Thyroid gland (tissue), 4 donors: ENCODE measurements at regions of chr6 and their contacts with region 1.

Region 1: DNA sequence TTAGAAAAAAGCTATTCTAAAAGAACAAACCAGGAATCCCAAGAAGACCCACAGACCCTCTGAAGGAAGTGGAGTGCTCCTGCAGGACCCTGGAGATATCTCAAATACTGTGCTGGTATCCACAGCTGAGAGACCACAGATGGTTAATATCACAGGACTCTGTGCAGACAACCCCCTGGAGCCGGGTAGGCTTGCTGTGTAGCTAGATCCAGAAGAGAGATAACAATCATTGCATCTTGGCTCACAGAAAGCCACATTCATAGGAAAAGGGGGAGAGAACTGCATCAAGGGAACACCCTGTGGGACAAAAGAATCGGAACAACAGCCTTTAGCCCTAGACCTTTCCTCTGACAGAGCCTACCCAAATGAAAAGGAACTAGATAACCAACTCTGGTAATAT is 689.5 kb downstream of the PHF3 start:
- DNase-seq: no peak
- H3K4me3 ChIP-seq: no peak overlapping the region
- H3K27ac ChIP-seq: no peak overlapping the region
- H3K4me1 ChIP-seq: no peaks in the 10 kb centered on the region
- H3K27me3 ChIP-seq: no peaks in the 10 kb centered on the region
- CTCF ChIP-seq: no peak
- POLR2A ChIP-seq: no peak

Region 2: GRCh38 chr6:64012351-64013001 is 312.6 kb before region 1 on chr6:
- intact Hi-C with region 1: loop called (anchors 10 kb)
- DNase-seq: peak; percentile 30 to 53
- H3K4me3 ChIP-seq: no peak overlapping the region
- H3K27ac ChIP-seq: peak overlapping the region; percentile 60 to 81 (median 80)
- H3K4me1 ChIP-seq: peaks cover 10 to 21% of the 10 kb centered on the region in 2 donors
- H3K27me3 ChIP-seq: no peaks in the 10 kb centered on the region
- CTCF ChIP-seq: peak in 4 of 6 experiments; percentile 60 to 86 (median 79)
- POLR2A ChIP-seq: no peak

Region 3: DNA sequence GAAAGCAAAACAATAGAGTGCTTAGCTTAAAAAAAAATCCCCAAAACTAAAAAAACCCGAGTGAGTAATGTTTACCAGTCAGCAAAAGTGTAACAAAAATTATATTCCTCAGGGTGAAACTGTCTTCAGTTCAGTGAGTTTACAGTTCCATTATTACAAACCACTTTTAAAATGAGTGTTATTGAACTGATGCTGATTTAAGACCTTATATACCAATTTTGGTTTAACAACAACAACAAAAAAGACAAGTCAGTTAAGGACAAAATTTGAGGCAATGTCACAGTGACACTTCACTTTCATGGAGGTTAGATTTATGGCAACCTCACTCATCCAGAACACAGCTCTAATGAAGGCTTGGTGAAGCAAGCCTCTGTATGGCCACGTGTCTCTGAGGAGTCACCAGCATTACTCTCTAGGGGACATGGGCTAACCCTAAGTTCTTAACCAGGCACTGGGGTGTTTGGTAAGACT is 58.7 kb before region 1 on chr6:
- intact Hi-C with region 1: no loop called
- DNase-seq: no peak
- H3K4me3 ChIP-seq: no peak overlapping the region
- H3K27ac ChIP-seq: no peak overlapping the region
- H3K4me1 ChIP-seq: no peaks in the 10 kb centered on the region
- H3K27me3 ChIP-seq: no peaks in the 10 kb centered on the region
- CTCF ChIP-seq: no peak
- POLR2A ChIP-seq: no peak